GM23248 (cell line): ENCODE measurements at regions of chr4 and their contacts with region 1.

Region 1: DNA sequence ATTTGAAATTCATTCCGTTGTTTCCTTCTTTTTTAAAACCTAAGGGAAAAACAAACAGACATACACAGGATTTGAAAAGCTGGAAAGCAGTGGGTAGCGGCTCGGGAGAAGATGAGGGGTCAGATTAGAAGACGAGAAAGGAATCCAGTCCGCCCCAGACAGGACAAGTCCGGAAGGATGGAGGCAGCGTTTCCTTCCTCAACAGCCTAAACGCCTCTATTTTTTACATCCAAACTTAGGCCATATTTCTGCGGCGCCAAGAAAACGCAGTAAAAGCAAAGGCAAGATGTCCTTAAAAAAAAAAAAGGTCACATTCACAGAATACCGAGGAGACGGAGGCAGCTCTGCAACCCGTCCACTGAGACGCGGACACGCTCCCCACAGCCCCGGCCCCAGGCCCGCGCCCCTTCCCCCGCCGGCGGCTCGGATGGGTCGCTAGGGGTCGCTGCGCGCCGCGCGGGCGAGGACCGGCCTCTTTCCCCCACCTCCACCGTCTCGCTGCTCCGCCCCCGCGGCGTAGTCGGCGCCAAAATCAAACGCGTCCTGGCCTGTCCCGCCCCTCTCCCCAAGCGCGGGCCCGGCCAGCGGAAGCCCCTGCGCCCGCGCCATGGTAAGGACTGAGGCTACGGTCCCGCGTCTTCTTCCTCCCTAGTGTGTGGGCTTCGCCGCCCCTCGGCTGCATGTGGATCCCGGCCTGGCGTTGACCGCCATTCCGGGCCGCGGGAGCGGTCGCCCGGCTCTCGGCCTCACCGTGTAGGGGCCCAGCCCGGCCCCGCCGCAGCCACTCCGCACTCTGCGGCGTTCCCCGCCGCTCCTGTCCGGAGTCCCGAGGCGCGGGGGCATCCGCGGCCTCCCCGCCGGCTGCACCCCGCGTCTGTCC is at the start of gene MND1:
- DNase-seq: peak; percentile 87
- H3K4me3 ChIP-seq: peak within 1 kb of the TSS; percentile 85
- H3K27ac ChIP-seq: peak within 1 kb of the TSS; percentile 13; the same call in 1 of the 2 replicates
- H3K4me1 ChIP-seq: peaks cover 13% of the 10 kb centered on the region
- H3K27me3 ChIP-seq: no peaks in the 10 kb centered on the region
- total RNA-seq, gene MND1: 1.2 and 4.2 TPM in 2 replicates

Region 2: DNA sequence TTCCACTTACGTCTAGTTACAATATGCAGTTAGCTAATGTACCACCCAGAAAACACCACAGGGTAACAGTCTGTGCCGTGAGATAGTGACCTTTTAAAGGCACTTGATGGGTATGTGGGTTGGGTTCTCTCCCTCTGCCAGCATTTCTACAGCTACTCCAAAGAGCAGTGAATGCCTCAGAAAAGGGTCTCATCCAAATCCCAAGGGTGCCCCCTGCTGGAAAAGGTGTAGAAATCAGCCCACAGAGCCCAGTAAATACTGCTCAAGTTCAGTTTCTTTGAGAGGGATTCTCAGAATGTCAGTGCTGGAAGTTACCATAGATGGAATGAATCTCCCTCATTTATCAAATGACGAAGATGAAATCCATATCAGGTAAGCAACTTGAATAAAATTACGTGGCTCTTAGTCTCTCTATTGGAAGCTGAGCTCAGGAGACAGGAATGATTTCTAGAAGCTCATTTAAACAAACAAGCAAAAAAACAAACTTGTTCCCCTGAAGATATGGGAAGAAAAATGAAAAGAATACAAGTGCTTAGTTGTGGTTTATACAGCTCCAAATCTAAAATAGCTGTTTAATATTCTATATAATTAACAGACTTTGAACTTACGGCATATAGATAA is 405.9 kb after region 1 on chr4:
- in situ Hi-C with region 1: loop called (anchors 25 kb)
- DNase-seq: peak; percentile 78
- H3K4me3 ChIP-seq: no peak overlapping the region
- H3K27ac ChIP-seq: no peak overlapping the region
- H3K4me1 ChIP-seq: no peaks in the 10 kb centered on the region
- H3K27me3 ChIP-seq: no peaks in the 10 kb centered on the region; the same call in 1 of the 2 replicates